ENCODE measurements at regions of chr19 and their contacts with region 1.

Region 1: GRCh38 chr19:771332-771785 is 20.4 kb downstream of the MISP start:
- DNase-seq: peak; percentile 53 to 63
- H3K4me3 ChIP-seq: no peak overlapping the region
- H3K4me3 Mint-ChIP-seq: no peak overlapping the region
- H3K27ac Mint-ChIP-seq: no peak overlapping the region
- H3K4me1 ChIP-seq: no peaks in the 10 kb centered on the region
- H3K4me1 Mint-ChIP-seq: no peaks in the 10 kb centered on the region
- H3K27me3 ChIP-seq: no peaks in the 10 kb centered on the region
- H3K27me3 Mint-ChIP-seq: no peaks in the 10 kb centered on the region
- CTCF ChIP-seq: peak; percentile 29

Region 2: GRCh38 chr19:680287-681028 is 90.9 kb before region 1 on chr19:
- CTCF ChIA-PET with region 1: no interaction called
- POLR2A ChIA-PET with region 1: interaction called, 10 read pairs
- intact Hi-C with region 1: no loop called
- DNase-seq: peak; percentile 98 to 99
- H3K4me3 ChIP-seq: peak overlapping the region; percentile 61
- H3K4me3 Mint-ChIP-seq: peak overlapping the region; percentile 75
- H3K27ac Mint-ChIP-seq: peak overlapping the region; percentile 82
- H3K4me1 ChIP-seq: peaks cover 11% of the 10 kb centered on the region
- H3K4me1 Mint-ChIP-seq: peaks cover 1% of the 10 kb centered on the region
- H3K27me3 ChIP-seq: no peaks in the 10 kb centered on the region
- H3K27me3 Mint-ChIP-seq: no peaks in the 10 kb centered on the region
- CTCF ChIP-seq: peak; percentile 23 to 45

Region 3: DNA sequence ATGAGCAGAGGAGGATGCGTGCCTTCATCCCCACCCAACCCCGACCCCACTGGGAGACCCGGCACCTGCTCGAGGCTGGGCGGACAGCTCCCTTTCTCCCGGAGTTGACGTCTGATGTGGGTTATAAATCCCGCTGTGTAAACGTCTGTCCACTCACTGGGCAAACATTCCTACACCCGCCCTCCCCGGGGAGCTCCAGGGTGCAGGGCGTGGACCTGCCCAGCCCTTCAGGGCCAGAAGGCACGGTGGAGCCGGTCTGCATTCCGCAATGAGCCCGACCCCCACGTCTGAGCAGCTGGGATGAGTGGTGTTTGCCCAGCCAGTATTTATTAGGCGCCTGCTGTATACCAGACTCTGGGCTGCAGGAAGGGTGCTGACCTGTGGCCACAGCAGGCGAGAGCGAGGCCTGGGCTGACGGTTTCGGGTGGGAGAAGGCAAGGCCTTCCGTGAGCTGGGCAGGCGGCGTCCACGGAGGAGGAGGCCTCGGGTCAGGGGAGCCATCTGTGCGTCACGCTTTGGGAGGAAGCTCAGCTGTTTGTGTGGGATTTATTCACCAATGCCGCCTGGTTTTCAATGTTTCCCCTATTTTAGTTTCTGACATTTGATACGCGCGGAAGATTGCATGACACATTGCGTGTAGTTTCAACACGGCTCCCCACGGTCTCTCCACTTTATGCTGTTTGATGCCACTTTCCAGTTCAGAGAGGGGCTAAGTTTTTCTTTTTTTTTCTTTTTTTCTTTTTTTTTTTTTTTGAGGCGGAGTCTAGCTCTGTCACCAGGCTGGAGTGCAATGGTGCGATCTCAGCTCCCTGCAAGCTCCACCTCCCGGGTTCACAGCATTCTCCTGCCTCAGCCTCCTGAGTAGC is 18.5 kb before region 1 on chr19:
- CTCF ChIA-PET with region 1: interaction called, 10 read pairs
- POLR2A ChIA-PET with region 1: no interaction called
- intact Hi-C with region 1: no loop called
- DNase-seq: peak; percentile 96 to 99
- H3K4me3 ChIP-seq: peak overlapping the region; percentile 14; the same call in 1 of the 2 replicates
- H3K4me3 Mint-ChIP-seq: peak overlapping the region; percentile 77
- H3K27ac Mint-ChIP-seq: peak overlapping the region; percentile 97
- H3K4me1 ChIP-seq: peaks cover 28% of the 10 kb centered on the region
- H3K4me1 Mint-ChIP-seq: no peaks in the 10 kb centered on the region
- H3K27me3 ChIP-seq: no peaks in the 10 kb centered on the region
- H3K27me3 Mint-ChIP-seq: no peaks in the 10 kb centered on the region
- CTCF ChIP-seq: no peak

Region 4: GRCh38 chr19:860481-861101 is 89.2 kb after region 1 on chr19:
- CTCF ChIA-PET with region 1: no interaction called
- POLR2A ChIA-PET with region 1: interaction called, 3 read pairs
- intact Hi-C with region 1: loop called (anchors 10 kb)
- DNase-seq: peak; percentile 86 to 87
- H3K4me3 ChIP-seq: peak overlapping the region; percentile 35
- H3K4me3 Mint-ChIP-seq: peak overlapping the region; percentile 54
- H3K27ac Mint-ChIP-seq: no peak overlapping the region
- H3K4me1 ChIP-seq: 0 out of 2 replicates have a peak, but pooled peaks cover 4% of the 10 kb centered on the region
- H3K4me1 Mint-ChIP-seq: no peaks in the 10 kb centered on the region
- H3K27me3 ChIP-seq: no peaks in the 10 kb centered on the region
- H3K27me3 Mint-ChIP-seq: no peaks in the 10 kb centered on the region
- CTCF ChIP-seq: peak in 1 of 2 experiments; percentile 14

Region 5: GRCh38 chr19:917323-918151 is 146.2 kb after region 1 on chr19 and contains the start of gene KISS1R:
- CTCF ChIA-PET with region 1: no interaction called
- POLR2A ChIA-PET with region 1: no interaction called
- intact Hi-C with region 1: loop called (anchors 1 kb)
- DNase-seq: peak; percentile 74 to 84
- H3K4me3 ChIP-seq: peak within 1 kb of the TSS; percentile 87
- H3K4me3 Mint-ChIP-seq: peak within 1 kb of the TSS; percentile 69
- H3K27ac Mint-ChIP-seq: no peak within 1 kb of the TSS
- H3K4me1 ChIP-seq: 0 out of 2 replicates have a peak, but pooled peaks cover 9% of the 10 kb centered on the region
- H3K4me1 Mint-ChIP-seq: no peaks in the 10 kb centered on the region
- H3K27me3 ChIP-seq: no peaks in the 10 kb centered on the region
- H3K27me3 Mint-ChIP-seq: no peaks in the 10 kb centered on the region
- CTCF ChIP-seq: peak; percentile 51 to 68
- total RNA-seq, gene KISS1R: 13.0 and 16.6 TPM in 2 replicates

Region 6: GRCh38 chr19:925526-926322 is 154.4 kb after region 1 on chr19 and contains the start of gene ARID3A:
- CTCF ChIA-PET with region 1: no interaction called
- POLR2A ChIA-PET with region 1: no interaction called
- intact Hi-C with region 1: loop called (anchors 1 kb)
- DNase-seq: peak; percentile 89 to 91
- H3K4me3 ChIP-seq: peak within 1 kb of the TSS; percentile 98
- H3K4me3 Mint-ChIP-seq: peak within 1 kb of the TSS; percentile 85
- H3K27ac Mint-ChIP-seq: peak within 1 kb of the TSS; percentile 82
- H3K4me1 ChIP-seq: peaks cover 33% of the 10 kb centered on the region
- H3K4me1 Mint-ChIP-seq: no peaks in the 10 kb centered on the region
- H3K27me3 ChIP-seq: no peaks in the 10 kb centered on the region
- H3K27me3 Mint-ChIP-seq: no peaks in the 10 kb centered on the region
- CTCF ChIP-seq: no peak
- total RNA-seq, gene ARID3A: 217 and 239 TPM in 2 replicates

Region 7: GRCh38 chr19:984165-984967 is 213.0 kb after region 1 on chr19 and contains the start of gene WDR18:
- CTCF ChIA-PET with region 1: no interaction called
- POLR2A ChIA-PET with region 1: no interaction called
- intact Hi-C with region 1: loop called (anchors 5 kb)
- DNase-seq: peak; percentile 90 to 92
- H3K4me3 ChIP-seq: peak within 1 kb of the TSS; percentile 60
- H3K4me3 Mint-ChIP-seq: peak within 1 kb of the TSS; percentile 95
- H3K27ac Mint-ChIP-seq: peak within 1 kb of the TSS; percentile 96
- H3K4me1 ChIP-seq: peaks cover 36% of the 10 kb centered on the region
- H3K4me1 Mint-ChIP-seq: peaks cover 8% of the 10 kb centered on the region
- H3K27me3 ChIP-seq: no peaks in the 10 kb centered on the region
- H3K27me3 Mint-ChIP-seq: no peaks in the 10 kb centered on the region
- CTCF ChIP-seq: no peak
- total RNA-seq, gene WDR18: 89.5 and 96.8 TPM in 2 replicates